IMR-90 (cell line): ENCODE measurements at regions of chr11 and their contacts with region 1.

Region 1: DNA sequence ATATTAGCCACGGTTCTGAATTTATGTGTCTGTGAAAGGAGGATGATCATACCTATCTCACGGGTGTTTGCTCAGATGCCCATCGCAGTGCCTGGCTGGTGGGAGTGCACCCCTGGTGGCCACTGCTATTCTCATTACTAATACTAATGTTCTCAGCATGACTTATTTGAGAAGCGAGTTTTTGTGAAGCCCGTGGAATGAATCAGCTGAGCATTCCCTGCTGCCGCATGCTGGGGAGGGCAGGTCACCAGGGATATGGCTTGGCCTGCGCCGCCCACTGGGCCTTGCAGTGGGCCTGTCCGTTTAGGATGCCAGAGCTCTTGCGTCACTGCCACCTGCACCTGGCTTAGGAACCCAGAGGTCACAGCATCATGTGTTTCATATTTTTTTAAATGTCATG is 16.9 kb downstream of the CTTN start:
- DNase-seq: peak; percentile 96
- ATAC-seq: peak; percentile 93
- H3K4me3 ChIP-seq: no peak overlapping the region
- H3K27ac ChIP-seq: peak overlapping the region; percentile 11; the same call in 1 of the 2 replicates
- H3K4me1 ChIP-seq: peaks cover 6% of the 10 kb centered on the region
- H3K27me3 ChIP-seq: no peaks in the 10 kb centered on the region
- CTCF ChIP-seq: peak; percentile 73
- POLR2A ChIP-seq: no peak
- RAD21 ChIP-seq: peak; percentile 67

Region 2: DNA sequence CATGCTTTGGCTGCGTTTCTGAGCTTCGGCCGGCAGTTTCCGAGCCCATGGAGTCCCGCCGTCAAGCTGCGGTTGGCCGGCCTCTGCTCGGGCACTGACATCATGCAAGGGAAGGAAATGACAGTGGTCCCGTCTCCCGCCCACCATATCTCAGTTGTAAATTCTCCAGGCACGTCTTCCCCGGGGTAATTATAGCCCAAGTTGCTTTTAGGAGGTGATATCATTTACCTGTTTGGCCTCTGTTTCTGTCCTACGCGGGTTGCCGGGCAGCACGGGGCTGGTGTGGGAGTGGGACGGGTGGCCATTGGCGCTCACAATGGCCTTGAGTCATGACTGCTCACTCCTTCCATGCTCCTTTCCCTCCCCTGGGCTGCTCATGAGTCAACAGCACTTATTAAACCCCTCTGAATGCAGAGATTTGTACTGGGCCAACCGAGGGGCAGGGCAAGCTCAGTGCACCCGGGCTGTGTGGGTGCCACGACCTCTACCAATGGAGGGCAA is 341.3 kb before region 1 on chr11:
- CTCF ChIA-PET with region 1: no interaction called
- POLR2A ChIA-PET with region 1: no interaction called
- dilution Hi-C with region 1: no loop called
- in situ Hi-C with region 1: no loop called
- intact Hi-C with region 1: no loop called
- DNase-seq: peak; percentile 73
- ATAC-seq: no peak
- H3K4me3 ChIP-seq: no peak overlapping the region
- H3K27ac ChIP-seq: no peak overlapping the region
- H3K4me1 ChIP-seq: peaks cover 9% of the 10 kb centered on the region
- H3K27me3 ChIP-seq: no peaks in the 10 kb centered on the region; the same call in 1 of the 2 replicates
- CTCF ChIP-seq: no peak
- POLR2A ChIP-seq: no peak
- RAD21 ChIP-seq: no peak

Region 3: GRCh38 chr11:70381872-70382861 is 33.0 kb before region 1 on chr11:
- CTCF ChIA-PET with region 1: interaction called, 6 read pairs
- POLR2A ChIA-PET with region 1: no interaction called
- dilution Hi-C with region 1: no loop called
- in situ Hi-C with region 1: no loop called
- intact Hi-C with region 1: loop called (anchors 1 kb)
- DNase-seq: peak; percentile 95
- ATAC-seq: peak; percentile 94
- H3K4me3 ChIP-seq: peak overlapping the region; percentile 2; the same call in 1 of the 2 replicates
- H3K27ac ChIP-seq: peak overlapping the region; percentile 94
- H3K4me1 ChIP-seq: peaks cover 18% of the 10 kb centered on the region
- H3K27me3 ChIP-seq: no peaks in the 10 kb centered on the region
- CTCF ChIP-seq: peak; percentile 37; the same call in 1 of the 2 replicates
- POLR2A ChIP-seq: no peak
- RAD21 ChIP-seq: peak; percentile 46

Region 4: DNA sequence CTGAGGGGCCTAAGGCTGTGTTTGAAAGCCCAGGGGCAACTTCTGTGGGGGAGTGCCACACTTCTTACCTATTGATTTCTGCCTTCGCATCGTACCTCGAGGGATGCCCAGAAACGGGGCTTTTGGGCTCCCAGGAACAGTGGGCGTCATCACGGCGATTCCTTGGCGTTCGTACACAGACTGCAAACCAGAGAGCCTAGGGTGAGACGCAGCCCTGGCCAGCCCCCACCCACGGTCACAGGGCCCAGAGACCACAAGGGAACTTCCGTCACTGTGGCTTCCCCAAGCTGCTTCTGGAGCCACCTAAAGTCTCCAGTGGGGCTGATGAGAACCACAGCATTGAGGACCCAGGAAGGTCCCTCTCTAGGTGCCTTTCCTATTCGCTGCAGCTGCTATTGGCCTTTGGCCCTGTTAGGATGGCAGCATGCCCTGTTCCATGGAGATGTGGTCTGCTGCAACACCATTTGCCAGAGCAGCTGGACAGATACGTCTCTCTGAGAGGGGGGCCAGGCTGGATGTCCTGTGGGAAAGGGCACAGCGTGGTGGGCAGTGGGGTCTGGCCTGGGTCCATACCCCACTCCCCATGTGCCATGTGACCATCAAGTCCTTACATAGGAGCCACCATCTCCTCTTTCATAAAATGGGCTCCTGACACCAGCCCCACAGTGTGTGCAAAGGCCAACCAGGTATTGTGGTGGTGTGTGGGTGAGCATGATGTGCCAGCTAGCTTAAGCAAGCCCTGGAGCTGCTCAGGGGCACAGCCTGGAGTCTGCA is 75.2 kb after region 1 on chr11:
- CTCF ChIA-PET with region 1: no interaction called
- POLR2A ChIA-PET with region 1: no interaction called
- dilution Hi-C with region 1: no loop called
- in situ Hi-C with region 1: no loop called
- intact Hi-C with region 1: no loop called
- DNase-seq: no peak
- ATAC-seq: no peak
- H3K4me3 ChIP-seq: no peak overlapping the region
- H3K27ac ChIP-seq: no peak overlapping the region
- H3K4me1 ChIP-seq: no peaks in the 10 kb centered on the region
- H3K27me3 ChIP-seq: no peaks in the 10 kb centered on the region
- CTCF ChIP-seq: no peak
- POLR2A ChIP-seq: no peak
- RAD21 ChIP-seq: no peak

Region 5: GRCh38 chr11:70556884-70557741 is 141.9 kb after region 1 on chr11:
- CTCF ChIA-PET with region 1: no interaction called
- POLR2A ChIA-PET with region 1: no interaction called
- dilution Hi-C with region 1: no loop called
- in situ Hi-C with region 1: no loop called
- intact Hi-C with region 1: no loop called
- DNase-seq: no peak
- ATAC-seq: peak; percentile 59
- H3K4me3 ChIP-seq: no peak overlapping the region
- H3K27ac ChIP-seq: no peak overlapping the region
- H3K4me1 ChIP-seq: no peaks in the 10 kb centered on the region
- H3K27me3 ChIP-seq: no peaks in the 10 kb centered on the region; the same call in 1 of the 2 replicates
- CTCF ChIP-seq: no peak
- POLR2A ChIP-seq: no peak
- RAD21 ChIP-seq: no peak